Ovary (tissue), 10 donors: ENCODE measurements at regions of chr13 and their contacts with region 1.

Region 1: DNA sequence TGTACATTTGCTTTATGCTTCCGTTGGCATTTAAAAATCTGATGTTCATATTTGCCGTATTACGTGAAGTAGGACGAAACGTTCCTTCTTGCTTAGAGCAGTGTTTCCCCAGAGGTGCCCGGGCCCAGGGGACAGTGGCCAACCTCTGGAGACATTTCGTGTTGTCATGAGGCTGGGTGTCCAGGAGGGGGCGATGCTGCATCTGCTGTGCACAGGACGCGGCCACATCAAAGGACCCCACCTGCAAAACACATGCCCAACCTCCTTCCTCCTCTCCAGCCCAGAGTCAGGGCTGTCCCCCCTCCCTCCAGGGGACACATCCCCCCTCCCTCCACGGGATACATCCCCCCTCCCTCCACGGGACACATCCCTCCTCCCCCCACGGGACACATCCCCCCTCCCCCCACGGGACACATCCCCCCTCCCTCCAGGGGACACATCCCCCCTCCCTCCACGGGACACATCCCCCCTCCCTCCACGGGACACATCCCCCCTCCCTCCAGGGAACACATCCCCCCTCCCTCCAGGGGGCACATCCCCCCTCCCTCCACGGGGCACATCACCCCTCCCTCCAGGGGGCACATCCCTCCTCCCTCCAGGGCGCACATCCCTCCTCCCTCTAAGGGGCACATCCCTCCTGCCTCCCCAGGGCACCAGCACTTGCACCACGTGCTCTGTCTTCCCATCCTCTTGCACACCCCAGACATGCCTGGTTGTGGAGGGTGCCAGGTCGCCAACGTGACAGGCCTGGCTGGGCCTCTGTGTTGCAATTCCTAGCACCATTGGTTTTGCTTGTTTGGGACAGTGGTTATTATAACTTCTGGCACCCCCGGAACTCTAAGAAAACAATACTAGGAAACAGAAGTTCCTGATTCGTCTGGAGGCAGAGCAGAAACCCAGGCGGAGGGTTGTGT is 46.7 kb downstream of the GAS6 start:
- DNase-seq: peak; percentile 85 to 90 (median 89)
- H3K4me3 ChIP-seq: no peak overlapping the region
- H3K27ac ChIP-seq: no peak overlapping the region
- H3K4me1 ChIP-seq: peaks cover 25% of the 10 kb centered on the region
- H3K27me3 ChIP-seq: no peaks in the 10 kb centered on the region
- CTCF ChIP-seq: peak; percentile 64 to 84 (median 83)
- EP300 ChIP-seq: no peak
- POLR2A ChIP-seq: no peak

Region 2: DNA sequence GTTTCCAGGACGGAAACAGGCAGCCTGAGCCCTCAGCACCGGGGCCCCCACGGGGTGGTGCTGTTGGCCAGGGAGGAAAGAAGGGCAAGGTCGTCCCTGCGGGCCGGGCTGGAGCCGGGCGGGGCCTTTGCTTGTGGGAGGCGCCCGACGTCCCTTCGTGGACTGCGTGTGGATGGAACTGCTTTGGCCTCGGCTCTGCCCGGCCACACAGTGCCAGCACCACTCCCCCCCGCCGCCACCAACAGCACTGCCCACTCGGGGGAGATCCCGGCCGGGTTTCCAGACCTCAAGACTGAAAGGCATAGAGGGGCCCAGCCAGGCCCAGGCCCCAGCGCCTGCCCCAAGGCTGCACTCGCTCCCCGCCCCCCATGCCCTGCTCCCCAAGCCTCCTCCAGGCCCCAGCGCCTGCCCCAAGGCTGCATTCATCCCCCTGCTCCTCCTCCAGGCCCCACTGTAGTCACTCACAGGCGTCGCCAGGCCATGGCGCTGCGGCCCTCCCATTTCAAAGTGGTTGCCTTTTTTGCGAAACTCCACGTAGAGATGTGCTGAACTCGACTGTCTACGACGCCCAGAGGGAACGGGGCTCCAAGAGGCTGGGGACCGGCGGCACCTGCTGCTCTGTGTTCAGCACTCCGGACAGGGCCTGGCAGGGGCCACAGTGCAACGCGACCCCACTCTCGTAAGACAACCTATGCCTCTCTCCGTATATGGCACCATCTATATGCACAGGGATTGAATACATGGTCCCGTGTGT is 134.2 kb after region 1 on chr13:
- intact Hi-C with region 1: loop called (anchors 1 to 5 kb)
- DNase-seq: peak; percentile 86 to 93 (median 86)
- H3K4me3 ChIP-seq: peak overlapping the region; percentile 8
- H3K27ac ChIP-seq: no peak overlapping the region
- H3K4me1 ChIP-seq: no peaks in the 10 kb centered on the region
- H3K27me3 ChIP-seq: no peaks in the 10 kb centered on the region
- CTCF ChIP-seq: peak; percentile 78 to 87 (median 79)
- EP300 ChIP-seq: no peak
- POLR2A ChIP-seq: no peak